ENCODE measurements at regions of chr10 and their contacts with region 1.

Region 1: DNA sequence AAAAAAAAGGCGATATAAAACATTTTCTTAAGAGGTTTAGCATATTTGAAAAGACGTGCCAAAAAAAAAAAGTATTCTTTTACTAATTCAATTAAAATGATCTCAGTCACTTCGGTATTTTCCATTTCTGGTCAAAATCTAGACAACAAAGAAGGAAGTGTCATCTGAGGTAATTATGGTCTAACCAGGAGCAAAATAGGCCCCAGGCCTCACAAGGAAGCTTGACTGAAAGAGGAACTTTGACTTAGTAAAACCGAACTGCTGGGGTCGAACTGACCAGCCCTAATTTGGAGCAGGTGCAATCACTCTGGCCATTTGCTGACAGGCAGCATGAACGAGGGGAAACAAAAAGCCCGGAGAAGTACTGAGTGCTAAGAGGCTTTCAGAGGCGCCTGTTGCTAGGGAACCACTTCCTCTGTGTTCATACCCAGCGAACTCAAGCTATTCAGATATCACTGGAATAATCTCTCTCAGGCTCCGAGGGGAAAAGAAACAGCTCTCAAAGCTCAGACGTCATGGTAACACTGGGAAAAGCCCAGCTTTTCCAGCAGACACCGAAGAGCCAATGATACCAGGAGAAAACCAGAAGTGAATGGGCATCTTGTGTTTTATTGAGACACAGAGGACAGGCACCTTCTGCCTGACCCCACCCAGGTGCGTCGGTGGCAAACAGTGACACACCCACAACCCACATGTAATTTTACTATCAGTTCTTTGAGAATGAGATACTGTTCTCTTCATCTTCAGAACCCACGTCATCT is 126.5 kb downstream of the FAM107B start:
- DNase-seq: peak; percentile 99
- ATAC-seq: peak; percentile 93
- H3K4me3 ChIP-seq: peak overlapping the region; percentile 59; the same call in 1 of the 2 replicates
- H3K27ac ChIP-seq: peak overlapping the region; percentile 74
- H3K4me1 ChIP-seq: peaks cover 39% of the 10 kb centered on the region
- H3K27me3 ChIP-seq: no peaks in the 10 kb centered on the region
- CTCF ChIP-seq: no peak
- EP300 ChIP-seq: peak; percentile 97 to 98
- POLR2A ChIP-seq: no peak
- RAD21 ChIP-seq: peak; percentile 37

Region 2: GRCh38 chr10:14500172-14500765 is 147.9 kb before region 1 on chr10:
- CTCF ChIA-PET with region 1: no interaction called
- POLR2A ChIA-PET with region 1: no interaction called
- RAD21 ChIA-PET with region 1: interaction called, 3 read pairs
- SMC1A ChIA-PET with region 1: interaction called, 4 read pairs
- in situ Hi-C with region 1: no loop called
- intact Hi-C with region 1: loop called (anchors 5 kb)
- DNase-seq: no peak
- ATAC-seq: no peak
- H3K4me3 ChIP-seq: no peak overlapping the region
- H3K27ac ChIP-seq: no peak overlapping the region
- H3K4me1 ChIP-seq: no peaks in the 10 kb centered on the region
- H3K27me3 ChIP-seq: no peaks in the 10 kb centered on the region
- CTCF ChIP-seq: no peak
- EP300 ChIP-seq: no peak
- POLR2A ChIP-seq: no peak
- RAD21 ChIP-seq: no peak

Region 3: GRCh38 chr10:14604181-14605142 is 43.7 kb before region 1 on chr10:
- CTCF ChIA-PET with region 1: interaction called, 10 read pairs
- POLR2A ChIA-PET with region 1: interaction called, 99 read pairs
- RAD21 ChIA-PET with region 1: interaction called, 13 read pairs
- SMC1A ChIA-PET with region 1: interaction called, 14 read pairs
- in situ Hi-C with region 1: loop called (anchors 5 kb)
- intact Hi-C with region 1: loop called (anchors 1 kb)
- DNase-seq: no peak
- ATAC-seq: peak; percentile 52
- H3K4me3 ChIP-seq: peak overlapping the region; percentile 77
- H3K27ac ChIP-seq: peak overlapping the region; percentile 84
- H3K4me1 ChIP-seq: peaks cover 44% of the 10 kb centered on the region
- H3K27me3 ChIP-seq: no peaks in the 10 kb centered on the region
- CTCF ChIP-seq: no peak
- EP300 ChIP-seq: no peak
- POLR2A ChIP-seq: peak; percentile 85
- RAD21 ChIP-seq: 0 out of 2 replicates have a peak, but pooled peaks have one; percentile 1

Region 4: DNA sequence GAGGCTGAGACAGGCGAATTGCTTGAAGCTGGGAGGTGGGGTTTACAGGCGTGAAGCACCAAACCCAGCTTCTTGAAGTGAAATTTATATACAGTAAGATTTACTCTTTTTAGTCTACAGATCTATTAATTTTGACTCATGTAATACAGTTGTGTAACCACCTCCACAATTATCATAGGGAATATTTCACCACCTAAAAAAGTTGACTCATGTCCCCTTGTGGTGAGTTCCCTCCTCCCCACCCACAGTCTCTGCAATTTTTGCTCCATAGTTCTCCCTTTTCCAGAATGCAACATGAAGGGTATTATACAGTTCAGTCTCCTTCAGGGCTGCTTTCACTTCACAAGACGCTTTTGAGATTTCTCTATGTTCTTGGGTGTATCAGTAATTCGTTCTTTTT is 30.3 kb before region 1 on chr10:
- CTCF ChIA-PET with region 1: interaction called, 11 read pairs
- POLR2A ChIA-PET with region 1: interaction called, 99 read pairs
- RAD21 ChIA-PET with region 1: interaction called, 12 read pairs
- SMC1A ChIA-PET with region 1: interaction called, 45 read pairs
- in situ Hi-C with region 1: no loop called
- intact Hi-C with region 1: no loop called
- DNase-seq: no peak
- ATAC-seq: no peak
- H3K4me3 ChIP-seq: no peak overlapping the region
- H3K27ac ChIP-seq: no peak overlapping the region
- H3K4me1 ChIP-seq: no peaks in the 10 kb centered on the region
- H3K27me3 ChIP-seq: no peaks in the 10 kb centered on the region
- CTCF ChIP-seq: no peak
- EP300 ChIP-seq: no peak
- POLR2A ChIP-seq: no peak
- RAD21 ChIP-seq: no peak

Region 5: GRCh38 chr10:14659626-14660196 is 11.5 kb after region 1 on chr10:
- CTCF ChIA-PET with region 1: interaction called, 6 read pairs
- POLR2A ChIA-PET with region 1: interaction called, 5 read pairs
- RAD21 ChIA-PET with region 1: interaction called, 14 read pairs
- SMC1A ChIA-PET with region 1: interaction called, 24 read pairs
- in situ Hi-C with region 1: no loop called
- intact Hi-C with region 1: loop called (anchors 1 kb)
- DNase-seq: peak; percentile 88
- ATAC-seq: peak; percentile 87
- H3K4me3 ChIP-seq: peak overlapping the region; percentile 26; the same call in 1 of the 2 replicates
- H3K27ac ChIP-seq: peak overlapping the region; percentile 33
- H3K4me1 ChIP-seq: peaks cover 43% of the 10 kb centered on the region
- H3K27me3 ChIP-seq: no peaks in the 10 kb centered on the region; a peak in 1 of 4 replicates
- CTCF ChIP-seq: no peak
- EP300 ChIP-seq: peak; percentile 87 to 96
- POLR2A ChIP-seq: no peak
- RAD21 ChIP-seq: peak; percentile 12; the same call in 1 of the 2 replicates

Region 6: GRCh38 chr10:14954001-14954770 is 306.0 kb after region 1 on chr10 and contains the start of gene DCLRE1C:
- CTCF ChIA-PET with region 1: no interaction called
- POLR2A ChIA-PET with region 1: no interaction called
- RAD21 ChIA-PET with region 1: interaction called, 6 read pairs
- SMC1A ChIA-PET with region 1: interaction called, 4 read pairs
- in situ Hi-C with region 1: no loop called
- intact Hi-C with region 1: loop called (anchors 1 kb)
- DNase-seq: peak; percentile 82
- ATAC-seq: peak; percentile 86
- H3K4me3 ChIP-seq: peak within 1 kb of the TSS; percentile 91
- H3K27ac ChIP-seq: peak within 1 kb of the TSS; percentile 98
- H3K4me1 ChIP-seq: peaks cover 21% of the 10 kb centered on the region
- H3K27me3 ChIP-seq: no peaks in the 10 kb centered on the region
- CTCF ChIP-seq: no peak
- EP300 ChIP-seq: peak in 1 of 2 experiments; percentile 56; a peak in 2 of 4 replicates
- POLR2A ChIP-seq: peak; percentile 80
- RAD21 ChIP-seq: no peak
- polyA plus RNA-seq, gene DCLRE1C: 15.7 to 26.2 TPM